Transverse colon (tissue), 4 donors: ENCODE measurements at regions of chr1 and their contacts with region 1.

Region 1: DNA sequence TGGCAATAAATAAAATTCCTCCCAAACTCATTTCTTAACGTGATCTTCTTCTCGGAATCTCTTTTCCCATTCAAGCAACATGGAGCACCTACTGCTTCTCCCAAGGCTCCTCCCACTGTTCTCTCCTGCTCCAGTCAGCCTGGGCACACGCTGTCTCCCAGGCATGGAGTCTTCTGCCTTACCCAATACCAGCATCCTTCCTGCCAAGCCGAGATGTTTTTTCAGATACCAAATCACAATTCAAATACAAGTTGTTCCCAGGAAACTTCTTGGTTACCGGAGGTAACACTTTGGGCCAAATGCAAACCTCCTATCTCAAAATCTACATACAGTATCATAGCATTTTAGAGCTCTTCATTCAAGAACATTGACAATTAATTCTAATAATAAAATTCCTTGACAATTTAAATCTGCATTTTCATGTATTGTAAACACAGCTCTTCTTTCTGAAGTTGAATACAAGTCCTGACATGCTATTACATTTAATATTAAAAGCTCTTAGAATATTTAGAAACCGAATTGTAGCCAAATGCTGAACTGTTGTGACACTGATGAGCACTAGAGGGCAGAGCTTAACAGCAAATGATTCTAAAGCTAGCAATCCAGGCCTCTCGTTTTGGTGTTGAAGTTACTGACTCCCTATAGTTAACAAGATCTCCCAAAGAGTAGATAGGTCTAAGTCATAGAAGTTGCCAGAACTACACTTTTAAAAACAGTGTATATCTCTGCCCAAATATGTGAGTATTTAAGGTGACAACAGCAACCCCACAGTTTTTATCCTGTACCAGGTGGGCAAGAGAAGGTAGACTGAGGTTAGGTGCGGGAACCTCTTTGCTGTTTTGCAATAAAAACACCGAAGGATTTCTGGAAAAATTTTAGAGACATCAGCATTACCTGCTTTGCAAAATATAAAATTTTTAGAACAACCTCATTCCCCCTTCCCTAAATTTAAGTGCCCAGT is 52.3 kb downstream of the BCAR3 start:
- DNase-seq: peak; percentile 30
- H3K4me3 ChIP-seq: no peak overlapping the region
- H3K27ac ChIP-seq: no peak overlapping the region
- H3K4me1 ChIP-seq: peaks cover 0 to 10% (median 0%) of the 10 kb centered on the region in 4 donors
- H3K27me3 ChIP-seq: no peaks in the 10 kb centered on the region
- CTCF ChIP-seq: peak; percentile 74 to 90 (median 84)
- EP300 ChIP-seq: no peak
- POLR2A ChIP-seq: no peak

Region 2: DNA sequence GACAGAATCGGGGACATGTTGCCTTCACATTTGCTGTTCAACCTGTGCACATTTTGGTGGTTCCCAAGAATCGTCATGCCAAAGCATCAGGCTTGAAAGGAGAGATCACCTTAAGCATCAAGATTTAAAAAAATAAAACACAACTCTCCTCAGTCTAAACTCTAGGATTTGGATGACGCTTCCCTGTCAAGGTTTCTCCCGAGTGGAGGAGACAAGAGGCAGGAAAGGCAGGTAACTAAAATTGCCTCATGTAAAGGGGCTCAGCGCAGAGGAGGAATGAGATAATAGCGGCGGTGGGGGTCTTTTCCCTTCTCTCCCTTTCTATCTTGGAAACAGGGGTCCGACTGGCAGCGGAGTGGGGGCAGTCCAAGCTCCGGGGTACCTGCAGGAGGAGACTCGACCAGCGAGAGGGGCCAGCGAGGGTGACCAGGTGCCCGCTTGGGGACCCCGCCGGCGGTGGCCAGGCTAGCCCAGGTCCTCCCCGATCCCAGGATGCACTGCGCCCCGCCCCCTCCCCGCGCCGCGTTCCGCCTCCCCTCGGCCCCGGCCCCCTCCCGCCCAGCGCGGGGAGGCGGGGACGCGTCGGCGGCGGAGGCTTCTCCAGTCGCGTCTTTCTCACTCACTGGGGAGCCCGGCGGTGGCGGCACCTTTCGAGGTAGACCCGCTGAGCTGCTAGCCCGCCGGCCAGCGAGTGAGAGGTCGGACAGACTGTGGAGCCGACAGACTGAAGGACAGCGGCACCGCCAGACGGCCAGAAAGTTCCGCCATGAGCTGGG is 181.7 kb before region 1 on chr1 and contains the start of gene FNBP1L:
- in situ Hi-C with region 1: loop called in 3 of 4 experiments (anchors 10 to 25 kb)
- intact Hi-C with region 1: no loop called
- DNase-seq: peak; percentile 84
- H3K4me3 ChIP-seq: peak within 1 kb of the TSS; percentile 75 to 90 (median 83)
- H3K27ac ChIP-seq: peak within 1 kb of the TSS; percentile 90 to 94 (median 92)
- H3K4me1 ChIP-seq: peaks cover 0 to 41% (median 10%) of the 10 kb centered on the region in 4 donors
- H3K27me3 ChIP-seq: no peaks in the 10 kb centered on the region
- CTCF ChIP-seq: no peak
- EP300 ChIP-seq: no peak
- POLR2A ChIP-seq: peak; percentile 75
- total RNA-seq, gene FNBP1L: 31.0 to 69.4 (median 49.0) TPM

Region 3: DNA sequence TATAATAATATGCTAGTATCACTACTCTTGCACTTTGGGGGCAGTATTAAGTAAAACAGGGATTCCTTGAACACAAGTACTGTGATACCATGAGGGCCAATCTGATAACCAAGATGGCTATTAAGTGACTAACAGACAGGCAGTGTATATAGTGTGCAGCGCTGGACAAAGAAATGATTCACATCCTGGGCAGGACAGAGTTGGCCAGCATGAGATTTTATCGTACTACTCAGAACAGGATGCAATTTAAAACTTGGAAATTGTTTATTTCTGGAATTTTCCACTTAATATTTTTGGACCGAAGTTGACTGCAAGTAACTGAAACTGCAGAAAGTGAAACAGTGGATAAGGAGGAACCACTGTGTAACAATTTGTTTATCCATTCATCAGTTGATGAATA is 175.0 kb after region 1 on chr1:
- in situ Hi-C with region 1: loop called in 1 of 4 experiments (anchors 10 kb)
- intact Hi-C with region 1: no loop called
- DNase-seq: no peak
- H3K4me3 ChIP-seq: no peak overlapping the region
- H3K27ac ChIP-seq: peak overlapping the region in 1 of 4 donors; percentile 10
- H3K4me1 ChIP-seq: no peaks in the 10 kb centered on the region
- H3K27me3 ChIP-seq: no peaks in the 10 kb centered on the region
- CTCF ChIP-seq: no peak
- EP300 ChIP-seq: no peak
- POLR2A ChIP-seq: no peak

Region 4: GRCh38 chr1:93814059-93814794 is 184.8 kb after region 1 on chr1:
- in situ Hi-C with region 1: loop called in 3 of 4 experiments (anchors 10 kb)
- intact Hi-C with region 1: loop called (anchors 1 kb)
- DNase-seq: peak; percentile 59
- H3K4me3 ChIP-seq: no peak overlapping the region
- H3K27ac ChIP-seq: no peak overlapping the region
- H3K4me1 ChIP-seq: peaks cover 0 to 16% (median 4%) of the 10 kb centered on the region in 4 donors
- H3K27me3 ChIP-seq: no peaks in the 10 kb centered on the region
- CTCF ChIP-seq: peak; percentile 93 to 97 (median 95)
- EP300 ChIP-seq: no peak
- POLR2A ChIP-seq: no peak

Region 5: GRCh38 chr1:93839307-93839706 is 209.9 kb after region 1 on chr1:
- in situ Hi-C with region 1: loop called in 1 of 4 experiments (anchors 10 kb)
- intact Hi-C with region 1: loop called (anchors 10 kb)
- DNase-seq: no peak
- H3K4me3 ChIP-seq: no peak overlapping the region
- H3K27ac ChIP-seq: no peak overlapping the region
- H3K4me1 ChIP-seq: peaks cover 0 to 4% (median under 1%) of the 10 kb centered on the region in 4 donors
- H3K27me3 ChIP-seq: no peaks in the 10 kb centered on the region
- CTCF ChIP-seq: no peak
- EP300 ChIP-seq: no peak
- POLR2A ChIP-seq: no peak

Region 6: GRCh38 chr1:93846211-93846991 is 217.0 kb after region 1 on chr1:
- in situ Hi-C with region 1: no loop called
- intact Hi-C with region 1: loop called (anchors 10 kb)
- DNase-seq: peak; percentile 91
- H3K4me3 ChIP-seq: peak overlapping the region; percentile 54 to 89 (median 80)
- H3K27ac ChIP-seq: peak overlapping the region; percentile 94 to 100 (median 98)
- H3K4me1 ChIP-seq: peaks cover 11 to 30% (median 20%) of the 10 kb centered on the region in 4 donors
- H3K27me3 ChIP-seq: no peaks in the 10 kb centered on the region
- CTCF ChIP-seq: peak; percentile 32 to 66 (median 47)
- EP300 ChIP-seq: no peak
- POLR2A ChIP-seq: peak; percentile 77